B cell (primary cell): ENCODE measurements at regions of chr11 and their contacts with region 1.

Region 1: GRCh38 chr11:129279326-129280026 is 87.4 kb upstream of the ARHGAP32 start:
- DNase-seq: peak; percentile 87
- ATAC-seq: peak; percentile 83
- H3K4me3 ChIP-seq: peak overlapping the region; percentile 46 to 63 (median 54)
- H3K4me3 Mint-ChIP-seq: peak overlapping the region; percentile 78
- H3K27ac ChIP-seq: peak overlapping the region in 1 of 2 donors; percentile 36
- H3K27ac Mint-ChIP-seq: peak overlapping the region; percentile 44
- H3K4me1 ChIP-seq: peaks cover 19 to 29% of the 10 kb centered on the region in 2 donors
- H3K4me1 Mint-ChIP-seq: peaks cover 29% of the 10 kb centered on the region
- H3K27me3 ChIP-seq: no peaks in the 10 kb centered on the region
- H3K27me3 Mint-ChIP-seq: peaks cover 37% of the 10 kb centered on the region
- CTCF ChIP-seq: no peak

Region 2: GRCh38 chr11:129298988-129299387 is 19.5 kb after region 1 on chr11:
- CTCF ChIA-PET with region 1: no interaction called
- POLR2A ChIA-PET with region 1: no interaction called
- intact Hi-C with region 1: no loop called
- DNase-seq: no peak
- ATAC-seq: no peak
- H3K4me3 ChIP-seq: no peak overlapping the region
- H3K4me3 Mint-ChIP-seq: no peak overlapping the region
- H3K27ac ChIP-seq: no peak overlapping the region
- H3K27ac Mint-ChIP-seq: no peak overlapping the region
- H3K4me1 ChIP-seq: no peaks in the 10 kb centered on the region
- H3K4me1 Mint-ChIP-seq: no peaks in the 10 kb centered on the region
- H3K27me3 ChIP-seq: peaks cover 0 to 3% (median 0%) of the 10 kb centered on the region in 4 experiments
- H3K27me3 Mint-ChIP-seq: peaks cover 7% of the 10 kb centered on the region
- CTCF ChIP-seq: no peak

Region 3: DNA sequence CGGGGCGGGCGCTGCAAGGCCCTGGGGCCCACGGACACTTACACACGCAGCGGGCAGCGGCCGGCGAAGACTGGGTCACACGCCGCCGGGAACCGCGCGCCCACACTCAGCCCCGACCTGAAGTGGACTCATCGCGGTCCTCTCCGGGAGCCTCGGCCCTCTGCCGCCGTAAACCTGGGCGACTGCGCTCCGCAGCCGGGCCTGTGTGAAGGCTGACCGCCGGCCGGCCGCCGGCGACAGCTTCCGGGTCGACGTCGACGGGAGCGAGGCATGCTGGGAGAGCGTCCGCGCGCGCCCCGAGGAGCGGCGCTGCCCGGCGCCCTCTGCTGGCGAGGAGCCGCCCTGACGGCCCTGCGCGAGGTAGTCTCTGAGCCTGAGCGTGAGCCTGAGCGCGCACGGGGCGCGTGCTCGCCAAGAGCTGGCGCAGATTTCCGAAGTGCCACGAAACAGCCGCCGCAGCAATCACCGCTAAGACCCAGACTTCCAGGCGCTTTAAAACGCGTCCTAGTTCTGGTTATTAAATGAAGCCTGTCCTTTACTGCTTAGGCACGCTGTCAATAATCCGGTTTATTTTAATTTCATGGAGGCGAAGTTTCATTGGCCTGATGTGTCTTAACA is 1636.9 kb after region 1 on chr11 and contains the start of gene SNX19:
- CTCF ChIA-PET with region 1: interaction called, 3 read pairs
- POLR2A ChIA-PET with region 1: no interaction called
- intact Hi-C with region 1: loop called (anchors 5 kb)
- DNase-seq: peak; percentile 94
- ATAC-seq: peak; percentile 99
- H3K4me3 ChIP-seq: peak within 1 kb of the TSS; percentile 70 to 97 (median 85)
- H3K4me3 Mint-ChIP-seq: peak within 1 kb of the TSS; percentile 91
- H3K27ac ChIP-seq: peak within 1 kb of the TSS; percentile 73 to 91
- H3K27ac Mint-ChIP-seq: peak within 1 kb of the TSS; percentile 90
- H3K4me1 ChIP-seq: peaks cover 12 to 24% of the 10 kb centered on the region in 2 donors
- H3K4me1 Mint-ChIP-seq: peaks cover 41% of the 10 kb centered on the region
- H3K27me3 ChIP-seq: peaks cover 0 to 9% (median 0%) of the 10 kb centered on the region in 4 experiments
- H3K27me3 Mint-ChIP-seq: peaks cover 21% of the 10 kb centered on the region
- CTCF ChIP-seq: peak; percentile 97
- total RNA-seq, gene SNX19: 74.0 and 76.0 TPM in 2 replicates